Gastrocnemius medialis (tissue), 4 donors: ENCODE measurements at regions of chr5 and their contacts with region 1.

Region 1: GRCh38 chr5:95781101-95781583 is 41.4 kb downstream of the GLRX start:
- DNase-seq: peak; percentile 77 to 88
- ATAC-seq: peak; percentile 75 to 87
- H3K4me3 ChIP-seq: no peak overlapping the region
- H3K27ac ChIP-seq: peak overlapping the region; percentile 76 to 85 (median 83)
- H3K4me1 ChIP-seq: peaks cover 18 to 72% of the 10 kb centered on the region in 2 donors
- H3K27me3 ChIP-seq: no peaks in the 10 kb centered on the region
- CTCF ChIP-seq: peak; percentile 87 to 95 (median 89)
- POLR2A ChIP-seq: no peak

Region 2: GRCh38 chr5:95730730-95731570 is 50.2 kb before region 1 on chr5 and contains the start of gene RHOBTB3:
- in situ Hi-C with region 1: loop called in 1 of 4 experiments (anchors 5 kb)
- intact Hi-C with region 1: loop called (anchors 2 kb)
- DNase-seq: peak; percentile 89 to 91
- ATAC-seq: peak; percentile 69 to 72
- H3K4me3 ChIP-seq: peak within 1 kb of the TSS; percentile 80 to 87 (median 85)
- H3K27ac ChIP-seq: peak within 1 kb of the TSS; percentile 91 to 96 (median 94)
- H3K4me1 ChIP-seq: peaks cover 39 to 48% of the 10 kb centered on the region in 2 donors
- H3K27me3 ChIP-seq: no peaks in the 10 kb centered on the region
- CTCF ChIP-seq: peak in 1 of 5 experiments; percentile 16
- POLR2A ChIP-seq: peak; percentile 88 to 92
- total RNA-seq, gene RHOBTB3: 40.1 to 134 (median 86.9) TPM

Region 3: GRCh38 chr5:95808686-95809413 is 27.7 kb after region 1 on chr5:
- in situ Hi-C with region 1: no loop called
- intact Hi-C with region 1: loop called (anchors 2 kb)
- DNase-seq: peak; percentile 62 to 81
- ATAC-seq: peak; percentile 65 to 67
- H3K4me3 ChIP-seq: peak overlapping the region in 1 of 4 donors; percentile 19
- H3K27ac ChIP-seq: peak overlapping the region; percentile 87 to 92 (median 91)
- H3K4me1 ChIP-seq: peaks cover 47 to 64% of the 10 kb centered on the region in 2 donors
- H3K27me3 ChIP-seq: no peaks in the 10 kb centered on the region
- CTCF ChIP-seq: no peak
- POLR2A ChIP-seq: no peak

Region 4: DNA sequence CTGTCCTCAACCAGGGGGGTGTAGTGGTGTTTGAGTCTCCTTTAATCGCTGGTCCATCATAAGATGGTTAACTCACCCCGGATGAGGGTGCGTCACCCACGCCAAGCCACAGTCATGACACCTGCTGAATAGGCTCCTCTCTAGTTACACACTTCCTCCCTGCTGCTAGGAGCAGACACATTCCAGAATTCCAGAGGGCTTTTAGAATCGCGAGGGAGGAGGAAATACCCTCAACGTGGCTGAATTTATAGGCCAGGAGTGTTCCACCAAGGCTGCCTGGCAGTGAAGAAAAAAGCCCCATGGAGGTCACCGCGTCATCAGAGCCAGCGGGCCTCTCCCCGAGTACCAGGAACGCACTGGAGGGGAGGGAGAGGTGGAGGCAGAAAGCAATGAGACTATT is 36.3 kb after region 1 on chr5:
- in situ Hi-C with region 1: no loop called
- intact Hi-C with region 1: loop called (anchors 2 kb)
- DNase-seq: peak in 1 of 2 donors; percentile 56
- ATAC-seq: peak; percentile 18 to 55
- H3K4me3 ChIP-seq: peak overlapping the region; percentile 75 to 100 (median 84)
- H3K27ac ChIP-seq: peak overlapping the region; percentile 87 to 92 (median 91)
- H3K4me1 ChIP-seq: peaks cover 54 to 68% of the 10 kb centered on the region in 2 donors
- H3K27me3 ChIP-seq: no peaks in the 10 kb centered on the region
- CTCF ChIP-seq: no peak
- POLR2A ChIP-seq: peak; percentile 20 to 43

Region 5: GRCh38 chr5:95827892-95828246 is 46.7 kb after region 1 on chr5:
- in situ Hi-C with region 1: no loop called
- intact Hi-C with region 1: no loop called
- DNase-seq: no peak
- ATAC-seq: no peak
- H3K4me3 ChIP-seq: no peak overlapping the region
- H3K27ac ChIP-seq: peak overlapping the region in 1 of 4 donors; percentile 31
- H3K4me1 ChIP-seq: peaks cover 18 to 20% of the 10 kb centered on the region in 2 donors
- H3K27me3 ChIP-seq: no peaks in the 10 kb centered on the region
- CTCF ChIP-seq: no peak
- POLR2A ChIP-seq: no peak

Region 6: DNA sequence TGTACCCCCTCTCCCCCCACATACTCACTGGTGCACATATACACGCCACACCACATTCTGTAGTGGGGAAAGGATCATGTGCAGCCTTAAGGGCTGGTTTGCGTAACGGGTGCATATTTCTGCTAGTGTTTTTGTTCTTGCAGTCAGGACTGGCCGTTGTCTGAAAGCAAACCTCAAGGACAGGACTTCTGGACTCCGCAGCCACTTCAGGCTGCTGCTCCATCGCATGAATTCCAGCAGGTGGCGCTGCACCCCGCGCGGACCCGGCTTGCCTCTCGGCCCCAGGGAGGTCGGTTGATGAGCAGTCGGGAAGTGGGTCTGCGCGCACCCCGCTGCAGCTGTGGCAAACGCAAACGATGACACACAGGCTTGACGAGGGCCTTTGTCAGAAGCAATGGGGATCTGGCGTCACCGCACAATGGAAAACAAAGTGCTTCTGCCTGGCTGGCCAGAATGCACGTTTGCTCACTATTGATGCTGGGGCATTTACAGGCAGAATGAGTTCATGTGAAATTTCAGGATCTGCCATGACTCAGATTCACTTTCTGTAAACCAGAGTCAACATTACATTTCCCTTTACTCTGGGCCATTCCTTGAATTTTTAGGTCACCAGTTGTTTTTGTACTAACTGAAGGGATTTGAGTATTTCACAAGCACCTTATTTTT is 77.7 kb after region 1 on chr5:
- in situ Hi-C with region 1: no loop called
- intact Hi-C with region 1: no loop called
- DNase-seq: peak; percentile 88 to 92
- ATAC-seq: peak; percentile 35 to 37
- H3K4me3 ChIP-seq: peak overlapping the region; percentile 5 to 36 (median 12)
- H3K27ac ChIP-seq: peak overlapping the region; percentile 86 to 94 (median 89)
- H3K4me1 ChIP-seq: peaks cover 70 to 76% of the 10 kb centered on the region in 2 donors
- H3K27me3 ChIP-seq: no peaks in the 10 kb centered on the region
- CTCF ChIP-seq: peak; percentile 98 to 100 (median 99)
- POLR2A ChIP-seq: peak; percentile 29 to 58